ENCODE measurements at regions of chr17 and their contacts with region 1.

Region 1: GRCh38 chr17:75896415-75897159 is at the start of gene TRIM65:
- DNase-seq: peak; percentile 88

Region 2: GRCh38 chr17:75843561-75844529 is 52.7 kb before region 1 on chr17 and contains the start of gene UNC13D:
- CTCF ChIA-PET with region 1: no interaction called
- POLR2A ChIA-PET with region 1: no interaction called
- DNase-seq: no peak

Region 3: GRCh38 chr17:75877752-75878173 is 18.8 kb before region 1 on chr17:
- CTCF ChIA-PET with region 1: interaction called, 7 read pairs
- POLR2A ChIA-PET with region 1: interaction called, 10 read pairs
- DNase-seq: peak; percentile 85

Region 4: GRCh38 chr17:75885431-75885830 is 11.2 kb before region 1 on chr17:
- CTCF ChIA-PET with region 1: interaction called, 3 read pairs
- POLR2A ChIA-PET with region 1: interaction called, 20 read pairs
- DNase-seq: no peak

Region 5: GRCh38 chr17:75910365-75911098 is 13.9 kb after region 1 on chr17:
- CTCF ChIA-PET with region 1: interaction called, 4 read pairs
- POLR2A ChIA-PET with region 1: interaction called, 18 read pairs
- DNase-seq: no peak

Measured in HEK293T (cell line).